Activated CD4-positive, alpha-beta memory T cell treated with anti-CD3 and anti-CD28 coated beads for 36 hours (primary cell): ENCODE measurements at regions of chr5 and their contacts with region 1.

Region 1: DNA sequence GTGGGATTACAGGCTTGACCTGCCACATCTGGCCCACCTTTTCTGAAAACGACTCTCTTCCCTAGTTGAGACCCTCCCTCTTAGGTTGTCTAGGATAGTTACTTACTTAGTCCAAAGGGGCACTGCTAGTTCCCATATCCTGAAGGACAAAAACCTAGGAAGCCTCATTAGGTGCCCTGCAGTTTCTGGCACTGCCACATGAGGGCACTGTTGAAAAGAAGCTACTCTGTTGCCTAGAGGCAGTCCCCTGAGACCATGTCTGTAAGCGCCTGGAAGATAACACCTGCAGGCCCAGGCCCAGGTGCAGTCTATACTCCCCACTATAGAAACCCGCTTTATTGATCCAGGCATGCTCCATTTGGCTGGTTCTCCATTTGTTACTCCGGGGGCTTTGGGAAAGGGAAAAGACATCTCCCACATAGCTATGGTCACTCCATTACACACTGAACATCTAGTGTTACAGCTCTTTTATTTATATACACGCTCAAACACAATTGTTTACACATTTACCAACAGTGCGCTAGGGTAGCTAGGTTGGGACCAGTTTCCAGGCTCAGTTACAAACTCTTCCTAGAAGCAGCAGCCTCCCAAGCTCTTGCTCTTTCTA is 73.4 kb upstream of the PPARGC1B start:
- DNase-seq: peak; percentile 57
- H3K4me3 Mint-ChIP-seq: peak overlapping the region; percentile 16
- H3K27ac Mint-ChIP-seq: no peak overlapping the region
- H3K4me1 Mint-ChIP-seq: no peaks in the 10 kb centered on the region
- H3K27me3 Mint-ChIP-seq: peaks cover 6% of the 10 kb centered on the region

Region 2: DNA sequence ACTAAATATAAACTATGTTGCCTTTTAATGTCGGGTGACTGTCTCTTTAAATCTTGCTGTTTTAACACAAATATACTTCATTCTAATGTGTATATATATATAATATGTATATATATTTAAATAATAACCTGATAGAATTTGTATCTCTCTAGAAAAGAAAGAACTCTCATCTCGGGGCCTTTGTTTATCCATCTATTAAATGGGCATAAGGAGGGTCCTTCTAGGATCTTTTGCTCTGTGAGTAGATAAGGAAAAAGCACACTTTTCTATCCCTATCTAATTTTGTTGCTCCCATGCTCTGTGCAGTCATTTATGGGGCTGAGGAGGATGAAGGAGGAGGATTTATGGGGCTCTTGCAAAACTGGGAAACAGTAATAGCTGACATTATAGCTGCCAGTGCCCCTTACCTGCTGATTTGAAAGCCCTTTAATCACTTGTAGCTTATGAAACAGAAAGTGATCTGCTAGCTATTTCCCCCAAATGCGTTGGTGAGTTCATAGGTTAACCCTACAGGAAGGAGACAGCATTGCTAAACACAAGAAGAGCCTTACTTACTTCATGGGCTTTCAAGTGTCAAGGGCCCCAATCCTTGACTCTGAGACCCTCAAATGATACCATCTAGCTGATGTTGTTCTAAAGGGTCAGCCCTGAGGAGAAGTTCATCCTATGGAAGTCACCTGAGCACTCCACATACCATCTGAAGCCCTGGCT is 67.6 kb after region 1 on chr5:
- CTCF ChIA-PET with region 1: interaction called, 5 read pairs
- POLR2A ChIA-PET with region 1: no interaction called
- intact Hi-C with region 1: loop called (anchors 5 kb)
- DNase-seq: no peak
- H3K4me3 Mint-ChIP-seq: no peak overlapping the region
- H3K27ac Mint-ChIP-seq: no peak overlapping the region
- H3K4me1 Mint-ChIP-seq: peaks cover 7% of the 10 kb centered on the region
- H3K27me3 Mint-ChIP-seq: peaks cover 5% of the 10 kb centered on the region